B cell (primary cell): ENCODE measurements at regions of chr3 and their contacts with region 1.

Region 1: DNA sequence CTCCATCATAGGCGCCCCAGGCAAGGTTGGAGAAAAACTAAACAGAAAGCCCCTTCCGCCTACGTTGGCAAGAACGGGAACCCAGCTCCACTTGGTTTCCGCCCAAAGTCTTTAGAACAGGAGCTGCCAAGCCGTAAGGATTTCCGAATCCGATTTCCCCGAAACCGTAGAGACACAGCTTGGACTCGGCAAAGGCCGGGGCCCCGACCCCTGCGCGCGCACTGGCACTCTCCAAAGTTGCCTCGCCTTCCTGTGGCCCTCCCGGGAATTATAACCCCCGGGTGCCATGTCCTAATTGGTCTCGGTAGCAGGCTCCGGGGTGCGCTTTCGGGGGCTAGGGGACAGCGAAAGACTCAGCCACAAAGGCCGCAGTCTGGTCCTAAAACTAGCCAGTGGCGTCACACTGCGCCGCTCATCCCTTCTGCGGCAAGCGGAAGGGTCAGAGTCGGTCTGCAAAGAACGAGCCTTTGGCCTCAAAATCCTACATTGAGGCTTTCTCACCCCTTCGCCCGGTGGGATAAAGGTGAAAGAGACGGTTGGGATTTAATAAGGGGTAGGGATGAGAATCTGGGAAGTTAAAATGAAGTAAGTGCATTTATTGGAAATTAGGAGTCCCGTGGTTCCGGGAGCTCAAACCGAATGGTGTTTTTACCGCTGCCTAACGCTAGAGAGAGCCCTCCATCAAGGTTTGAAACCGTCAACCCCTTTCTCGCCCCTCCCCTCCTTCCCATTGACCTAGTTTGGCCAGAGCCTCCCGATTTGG is 6.8 kb downstream of the BCL6 start:
- DNase-seq: peak; percentile 81
- ATAC-seq: peak; percentile 46
- H3K4me3 ChIP-seq: peak overlapping the region; percentile 66 to 93 (median 84)
- H3K4me3 Mint-ChIP-seq: peak overlapping the region; percentile 97
- H3K27ac ChIP-seq: peak overlapping the region in 1 of 2 donors; percentile 66
- H3K27ac Mint-ChIP-seq: peak overlapping the region; percentile 75
- H3K4me1 ChIP-seq: peaks cover 34 to 57% of the 10 kb centered on the region in 2 donors
- H3K4me1 Mint-ChIP-seq: peaks cover 62% of the 10 kb centered on the region
- H3K27me3 ChIP-seq: no peaks in the 10 kb centered on the region
- H3K27me3 Mint-ChIP-seq: no peaks in the 10 kb centered on the region
- CTCF ChIP-seq: peak; percentile 82

Region 2: DNA sequence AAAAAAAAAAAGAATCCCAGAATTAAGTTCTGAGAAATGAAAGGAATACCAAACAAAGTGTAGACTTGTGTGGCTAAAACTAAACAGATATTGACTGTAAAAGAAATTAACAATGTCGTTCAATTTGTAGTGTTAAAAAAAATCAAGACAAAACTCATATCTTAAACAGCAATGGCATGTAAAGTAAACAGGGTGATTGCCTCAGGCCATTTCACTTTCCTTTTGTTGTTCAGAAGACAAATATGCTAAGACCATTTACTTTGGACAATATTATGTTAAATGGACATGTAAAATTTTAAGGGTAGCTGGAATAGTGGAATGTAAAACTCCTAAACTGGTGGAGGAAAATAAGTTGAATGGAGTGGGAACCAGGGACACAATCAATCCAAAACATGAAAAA is 231.2 kb before region 1 on chr3:
- CTCF ChIA-PET with region 1: no interaction called
- POLR2A ChIA-PET with region 1: no interaction called
- intact Hi-C with region 1: no loop called
- DNase-seq: no peak
- ATAC-seq: no peak
- H3K4me3 ChIP-seq: no peak overlapping the region
- H3K4me3 Mint-ChIP-seq: no peak overlapping the region
- H3K27ac ChIP-seq: no peak overlapping the region
- H3K27ac Mint-ChIP-seq: no peak overlapping the region
- H3K4me1 ChIP-seq: no peaks in the 10 kb centered on the region
- H3K4me1 Mint-ChIP-seq: no peaks in the 10 kb centered on the region
- H3K27me3 ChIP-seq: peaks cover 0 to 4% (median 0%) of the 10 kb centered on the region in 4 experiments
- H3K27me3 Mint-ChIP-seq: peaks cover 35% of the 10 kb centered on the region
- CTCF ChIP-seq: no peak

Region 3: DNA sequence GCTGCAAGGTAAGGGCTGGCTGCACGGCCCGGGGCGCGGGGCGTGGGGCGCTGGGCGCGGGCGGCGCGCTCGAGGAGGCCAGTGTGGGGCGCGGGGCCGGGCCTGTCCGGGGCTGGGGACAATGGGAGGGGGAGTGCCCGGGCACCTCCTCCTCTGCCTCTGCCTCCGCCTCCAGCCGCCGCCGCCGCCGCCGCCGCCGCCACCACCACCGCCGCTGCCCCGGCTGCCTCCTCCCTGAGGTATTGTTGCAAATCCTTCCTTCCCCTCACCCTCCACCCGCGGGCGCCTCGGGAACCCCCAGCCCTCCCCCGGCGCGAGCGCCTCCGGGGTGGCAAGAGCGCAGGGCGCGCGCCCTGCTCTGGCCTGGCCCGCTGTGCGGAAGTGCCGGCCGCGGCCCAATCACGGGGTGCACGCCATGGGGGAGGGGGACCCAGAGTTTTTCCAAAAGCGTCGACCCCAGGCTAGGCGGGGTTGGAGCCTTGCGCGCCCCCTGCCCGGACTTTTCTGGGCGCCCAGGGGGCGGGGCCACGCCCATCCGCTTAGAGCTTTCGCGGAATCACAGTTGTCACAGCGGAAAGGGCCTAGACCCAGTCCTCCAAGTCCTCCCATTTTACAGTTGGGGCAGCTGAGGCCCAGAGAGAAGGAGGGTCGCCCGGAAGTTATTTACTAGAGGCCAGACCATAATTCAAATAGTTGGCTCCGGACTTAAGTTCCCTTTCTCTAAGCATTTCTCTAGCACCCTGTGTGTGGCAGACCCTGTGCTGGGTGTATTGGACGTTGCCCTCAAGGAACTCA is 415.7 kb after region 1 on chr3 and contains the start of gene LPP:
- CTCF ChIA-PET with region 1: interaction called, 10 read pairs
- POLR2A ChIA-PET with region 1: interaction called, 3 read pairs
- intact Hi-C with region 1: no loop called
- DNase-seq: peak; percentile 94
- ATAC-seq: peak; percentile 87
- H3K4me3 ChIP-seq: peak within 1 kb of the TSS; percentile 80 to 97 (median 93)
- H3K4me3 Mint-ChIP-seq: peak within 1 kb of the TSS; percentile 95
- H3K27ac ChIP-seq: peak within 1 kb of the TSS; percentile 88 to 91
- H3K27ac Mint-ChIP-seq: peak within 1 kb of the TSS; percentile 95
- H3K4me1 ChIP-seq: peaks cover 18 to 27% of the 10 kb centered on the region in 2 donors
- H3K4me1 Mint-ChIP-seq: peaks cover 51% of the 10 kb centered on the region
- H3K27me3 ChIP-seq: no peaks in the 10 kb centered on the region
- H3K27me3 Mint-ChIP-seq: no peaks in the 10 kb centered on the region
- CTCF ChIP-seq: peak; percentile 19
- total RNA-seq, gene LPP: 81.7 and 94.5 TPM in 2 replicates

Region 4: GRCh38 chr3:188370081-188370830 is 631.7 kb after region 1 on chr3:
- CTCF ChIA-PET with region 1: interaction called, 15 read pairs
- POLR2A ChIA-PET with region 1: no interaction called
- intact Hi-C with region 1: no loop called
- DNase-seq: no peak
- ATAC-seq: no peak
- H3K4me3 ChIP-seq: no peak overlapping the region
- H3K4me3 Mint-ChIP-seq: no peak overlapping the region
- H3K27ac ChIP-seq: no peak overlapping the region
- H3K27ac Mint-ChIP-seq: peak overlapping the region; percentile 42
- H3K4me1 ChIP-seq: peaks cover 10 to 15% of the 10 kb centered on the region in 2 donors
- H3K4me1 Mint-ChIP-seq: peaks cover 40% of the 10 kb centered on the region
- H3K27me3 ChIP-seq: no peaks in the 10 kb centered on the region
- H3K27me3 Mint-ChIP-seq: no peaks in the 10 kb centered on the region
- CTCF ChIP-seq: no peak

Region 5: DNA sequence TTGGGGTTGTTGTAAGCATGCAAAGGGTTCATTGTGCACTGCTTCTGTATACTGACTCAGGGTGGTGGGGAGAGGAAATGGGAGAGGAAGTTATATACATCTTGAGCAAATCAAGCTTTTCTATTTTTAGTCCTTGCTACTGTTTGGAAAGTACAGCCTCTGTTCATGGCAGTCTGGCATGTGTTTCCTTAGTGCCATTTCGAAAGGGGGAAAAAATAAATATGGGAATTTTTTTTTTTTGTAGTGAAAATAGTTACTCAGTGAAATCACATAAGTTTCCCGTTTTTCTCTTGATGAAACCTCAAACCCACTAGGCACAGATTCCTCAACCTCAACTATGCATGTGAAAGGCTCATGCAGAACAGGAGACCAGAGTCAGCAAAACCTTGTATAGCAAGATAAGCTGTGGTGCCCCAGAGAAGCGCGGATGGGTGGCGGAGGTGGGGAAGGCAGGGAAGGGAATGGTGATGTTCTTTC is 768.8 kb after region 1 on chr3:
- CTCF ChIA-PET with region 1: interaction called, 15 read pairs
- POLR2A ChIA-PET with region 1: no interaction called
- intact Hi-C with region 1: no loop called
- DNase-seq: peak; percentile 26
- ATAC-seq: peak; percentile 33
- H3K4me3 ChIP-seq: peak overlapping the region in 3 of 5 experiments; percentile 8 to 26 (median 9)
- H3K4me3 Mint-ChIP-seq: peak overlapping the region; percentile 27
- H3K27ac ChIP-seq: no peak overlapping the region
- H3K27ac Mint-ChIP-seq: no peak overlapping the region
- H3K4me1 ChIP-seq: peaks cover 14% of the 10 kb centered on the region in 2 donors
- H3K4me1 Mint-ChIP-seq: peaks cover 28% of the 10 kb centered on the region
- H3K27me3 ChIP-seq: no peaks in the 10 kb centered on the region
- H3K27me3 Mint-ChIP-seq: no peaks in the 10 kb centered on the region
- CTCF ChIP-seq: no peak

Region 6: GRCh38 chr3:188749010-188749617 is 1010.6 kb after region 1 on chr3:
- CTCF ChIA-PET with region 1: interaction called, 111 read pairs
- POLR2A ChIA-PET with region 1: interaction called, 3 read pairs
- intact Hi-C with region 1: loop called (anchors 1 kb)
- DNase-seq: peak; percentile 65
- ATAC-seq: no peak
- H3K4me3 ChIP-seq: no peak overlapping the region
- H3K4me3 Mint-ChIP-seq: no peak overlapping the region
- H3K27ac ChIP-seq: no peak overlapping the region
- H3K27ac Mint-ChIP-seq: no peak overlapping the region
- H3K4me1 ChIP-seq: peaks cover 18 to 20% of the 10 kb centered on the region in 2 donors
- H3K4me1 Mint-ChIP-seq: peaks cover 22% of the 10 kb centered on the region
- H3K27me3 ChIP-seq: no peaks in the 10 kb centered on the region
- H3K27me3 Mint-ChIP-seq: no peaks in the 10 kb centered on the region
- CTCF ChIP-seq: peak; percentile 76

Region 7: GRCh38 chr3:189041482-189042090 is 1303.1 kb after region 1 on chr3:
- CTCF ChIA-PET with region 1: interaction called, 96 read pairs
- POLR2A ChIA-PET with region 1: no interaction called
- intact Hi-C with region 1: no loop called
- DNase-seq: peak; percentile 73
- ATAC-seq: peak; percentile 86
- H3K4me3 ChIP-seq: no peak overlapping the region
- H3K4me3 Mint-ChIP-seq: no peak overlapping the region
- H3K27ac ChIP-seq: no peak overlapping the region
- H3K27ac Mint-ChIP-seq: no peak overlapping the region
- H3K4me1 ChIP-seq: no peaks in the 10 kb centered on the region
- H3K4me1 Mint-ChIP-seq: peaks cover 2% of the 10 kb centered on the region
- H3K27me3 ChIP-seq: no peaks in the 10 kb centered on the region
- H3K27me3 Mint-ChIP-seq: no peaks in the 10 kb centered on the region
- CTCF ChIP-seq: peak; percentile 69